ENCODE measurements at regions of chr1 and their contacts with region 1.

Region 1: DNA sequence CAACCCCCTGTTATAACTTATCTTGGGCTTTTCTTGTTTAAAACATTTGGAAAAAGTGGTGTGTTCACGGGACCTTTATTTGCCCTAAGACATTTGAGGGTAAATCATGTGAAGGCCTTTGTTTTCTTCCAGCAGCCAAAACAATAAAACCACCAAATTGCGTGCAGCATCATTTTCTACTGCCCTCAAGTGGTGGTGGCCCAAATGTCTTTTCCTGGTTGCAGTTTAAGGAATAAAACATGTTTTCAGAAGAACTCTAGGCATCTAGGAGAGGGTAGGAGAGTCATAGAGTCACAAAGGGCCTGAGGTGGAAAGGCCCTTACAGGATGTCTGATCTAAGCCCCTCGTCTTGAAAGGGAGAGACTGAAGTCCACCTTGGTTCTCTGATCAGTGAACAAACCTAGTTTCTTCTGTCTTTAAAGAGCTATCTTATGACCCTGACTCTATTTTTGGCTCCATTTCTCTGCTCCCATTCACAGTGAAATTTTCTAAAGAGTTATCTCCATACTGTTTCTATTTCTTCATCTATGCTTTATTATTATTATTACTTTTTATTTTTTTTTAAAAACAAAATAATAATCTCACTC is 16.0 kb upstream of the EPS15 start:
- DNase-seq: peak in 6 of 9 donors; percentile 11 to 34 (median 25)
- ATAC-seq: peak; percentile 60
- H3K4me3 ChIP-seq: no peak overlapping the region
- H3K4me3 Mint-ChIP-seq: no peak overlapping the region
- H3K27ac ChIP-seq: no peak overlapping the region
- H3K27ac Mint-ChIP-seq: peak overlapping the region in 5 of 9 donors; percentile 8 to 84 (median 25)
- H3K4me1 ChIP-seq: peaks cover 0 to 8% of the 10 kb centered on the region in 2 donors
- H3K4me1 Mint-ChIP-seq: peaks cover 0 to 10% (median 2%) of the 10 kb centered on the region in 7 donors
- H3K27me3 ChIP-seq: no peaks in the 10 kb centered on the region
- H3K27me3 Mint-ChIP-seq: no peaks in the 10 kb centered on the region

Region 2: DNA sequence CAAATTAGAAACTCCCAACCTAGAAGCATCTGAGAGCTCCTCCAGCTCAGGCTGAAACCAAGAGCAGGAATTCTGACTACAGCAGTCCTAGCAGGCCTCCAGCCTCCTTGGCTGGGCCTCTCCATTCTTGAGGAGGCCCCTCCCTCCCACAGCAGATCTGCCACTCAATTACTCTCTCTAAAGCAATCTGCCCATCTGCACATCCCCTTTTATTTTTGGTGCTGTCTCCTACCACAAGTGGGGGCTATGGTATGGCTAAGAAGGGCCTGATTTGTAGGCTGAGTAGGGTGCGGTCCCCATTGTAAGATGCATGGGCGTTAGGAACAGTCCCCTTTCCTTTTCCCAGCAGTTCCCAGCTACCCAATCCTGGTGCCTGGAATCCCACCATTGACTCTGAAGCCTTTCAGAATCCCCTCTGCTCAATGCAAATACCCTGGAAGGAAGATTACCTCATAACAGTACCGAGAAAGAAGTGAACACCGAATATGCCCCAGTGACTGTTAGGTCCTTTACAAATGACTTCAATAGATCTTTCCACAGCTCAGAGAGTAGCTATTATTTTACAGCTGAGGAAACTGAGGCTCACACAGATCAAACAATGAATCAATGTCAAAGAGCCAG is 193.1 kb before region 1 on chr1:
- CTCF ChIA-PET with region 1: no interaction called
- POLR2A ChIA-PET with region 1: no interaction called
- intact Hi-C with region 1: loop called in 1 of 2 experiments (anchors 10 kb)
- DNase-seq: no peak
- ATAC-seq: no peak
- H3K4me3 ChIP-seq: no peak overlapping the region
- H3K4me3 Mint-ChIP-seq: no peak overlapping the region
- H3K27ac ChIP-seq: no peak overlapping the region
- H3K27ac Mint-ChIP-seq: peak overlapping the region in 1 of 9 donors; percentile 49
- H3K4me1 ChIP-seq: no peaks in the 10 kb centered on the region
- H3K4me1 Mint-ChIP-seq: peaks cover 0 to 10% (median 3%) of the 10 kb centered on the region in 7 donors
- H3K27me3 ChIP-seq: peaks cover 0 to 14% of the 10 kb centered on the region in 2 donors
- H3K27me3 Mint-ChIP-seq: peaks cover 46 to 59% (median 48%) of the 10 kb centered on the region in 5 donors

Region 3: DNA sequence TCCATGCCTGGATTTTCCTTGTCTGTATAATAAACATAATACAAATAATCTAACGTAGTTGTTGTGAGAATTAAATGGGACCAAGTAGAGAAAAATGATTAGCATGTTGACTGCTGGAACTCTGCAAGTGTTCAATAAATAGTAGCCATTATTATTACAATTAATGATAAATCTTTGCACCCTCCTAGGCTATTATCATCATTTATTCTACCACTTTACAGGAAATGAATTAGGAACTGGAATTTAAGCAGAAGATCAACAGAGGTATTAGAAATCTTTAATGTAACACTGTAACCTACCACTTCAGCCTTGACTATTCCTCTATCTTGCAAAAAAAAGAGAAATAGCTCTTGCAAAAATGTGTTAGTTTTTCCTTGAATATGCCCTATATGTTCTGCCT is 142.9 kb before region 1 on chr1:
- CTCF ChIA-PET with region 1: no interaction called
- POLR2A ChIA-PET with region 1: no interaction called
- intact Hi-C with region 1: loop called in 1 of 2 experiments (anchors 10 kb)
- DNase-seq: no peak
- ATAC-seq: no peak
- H3K4me3 ChIP-seq: no peak overlapping the region
- H3K4me3 Mint-ChIP-seq: no peak overlapping the region
- H3K27ac ChIP-seq: no peak overlapping the region
- H3K27ac Mint-ChIP-seq: no peak overlapping the region
- H3K4me1 ChIP-seq: no peaks in the 10 kb centered on the region
- H3K4me1 Mint-ChIP-seq: peaks cover 0 to 2% (median 0%) of the 10 kb centered on the region in 7 donors
- H3K27me3 ChIP-seq: no peaks in the 10 kb centered on the region
- H3K27me3 Mint-ChIP-seq: no peaks in the 10 kb centered on the region

Region 4: DNA sequence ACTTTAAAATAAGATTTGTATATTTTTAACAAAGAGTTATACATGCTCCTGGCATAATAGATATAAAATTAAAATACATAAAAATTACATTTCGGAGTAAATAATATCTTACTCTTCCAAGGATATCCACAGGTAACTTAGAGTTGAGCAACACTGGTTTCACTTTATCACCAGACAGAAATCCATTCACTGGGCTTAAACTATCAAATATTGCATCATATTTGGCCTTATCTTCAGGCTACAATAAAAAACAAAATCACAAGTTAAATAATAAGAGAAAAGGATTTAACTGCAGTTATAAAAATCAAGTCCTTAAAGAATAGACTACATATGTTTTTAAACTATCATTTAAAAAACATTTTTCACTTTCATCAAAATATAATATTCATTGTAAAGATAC is 71.5 kb before region 1 on chr1:
- CTCF ChIA-PET with region 1: no interaction called
- POLR2A ChIA-PET with region 1: no interaction called
- intact Hi-C with region 1: loop called in 1 of 2 experiments (anchors 10 kb)
- DNase-seq: no peak
- ATAC-seq: no peak
- H3K4me3 ChIP-seq: no peak overlapping the region
- H3K4me3 Mint-ChIP-seq: no peak overlapping the region
- H3K27ac ChIP-seq: no peak overlapping the region
- H3K27ac Mint-ChIP-seq: no peak overlapping the region
- H3K4me1 ChIP-seq: no peaks in the 10 kb centered on the region
- H3K4me1 Mint-ChIP-seq: peaks cover 0 to 5% (median 3%) of the 10 kb centered on the region in 7 donors
- H3K27me3 ChIP-seq: no peaks in the 10 kb centered on the region
- H3K27me3 Mint-ChIP-seq: no peaks in the 10 kb centered on the region